ENCODE measurements at regions of chr2 and their contacts with region 1.

Region 1: GRCh38 chr2:234288974-234289455 is 207.9 kb downstream of the ARL4C start:
- DNase-seq: peak; percentile 76 to 83 (median 82)
- H3K4me3 ChIP-seq: peak overlapping the region in 1 of 2 donors; percentile 23
- H3K4me3 Mint-ChIP-seq: peak overlapping the region in 4 of 8 donors; percentile 46 to 85 (median 70)
- H3K27ac ChIP-seq: peak overlapping the region; percentile 97
- H3K27ac Mint-ChIP-seq: peak overlapping the region; percentile 93 to 100 (median 100)
- H3K4me1 ChIP-seq: peaks cover 56% of the 10 kb centered on the region
- H3K4me1 Mint-ChIP-seq: peaks cover 50 to 65% (median 58%) of the 10 kb centered on the region in 4 donors
- H3K27me3 ChIP-seq: no peaks in the 10 kb centered on the region
- H3K27me3 Mint-ChIP-seq: no peaks in the 10 kb centered on the region

Region 2: DNA sequence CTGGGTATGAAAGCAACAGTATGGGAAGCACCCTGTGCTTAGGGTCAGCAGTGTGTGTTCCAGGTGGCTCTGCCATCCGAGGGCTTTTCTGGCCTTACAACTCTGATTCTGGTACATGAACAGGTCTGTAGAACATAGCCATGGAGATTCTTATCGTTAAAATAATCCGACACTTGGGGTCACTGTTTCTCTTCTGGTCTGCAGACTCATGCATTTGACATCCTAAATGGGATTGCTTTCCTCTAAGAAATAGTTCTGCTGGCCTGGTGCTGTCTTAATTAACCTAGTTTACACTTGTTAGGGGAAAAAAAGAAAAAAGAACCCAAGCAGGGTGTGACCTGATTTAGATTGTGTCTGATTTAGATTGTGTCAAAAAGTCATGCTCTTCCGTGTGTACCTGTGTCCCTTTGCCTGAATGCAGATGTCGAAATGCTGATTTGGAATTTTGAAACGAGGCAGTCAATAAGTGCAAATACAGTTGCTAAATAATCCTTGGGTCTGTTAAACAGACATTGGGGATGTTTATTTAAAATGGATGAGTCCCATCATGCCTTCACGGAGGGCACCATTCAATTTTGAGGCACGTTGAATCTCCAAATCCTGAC is 312.2 kb before region 1 on chr2:
- CTCF ChIA-PET with region 1: interaction called, 4 read pairs
- POLR2A ChIA-PET with region 1: interaction called, 3 read pairs
- intact Hi-C with region 1: loop called (anchors 1 kb)
- DNase-seq: peak; percentile 40 to 69 (median 66)
- H3K4me3 ChIP-seq: no peak overlapping the region
- H3K4me3 Mint-ChIP-seq: peak overlapping the region in 6 of 8 donors; percentile 1 to 66 (median 27)
- H3K27ac ChIP-seq: no peak overlapping the region
- H3K27ac Mint-ChIP-seq: peak overlapping the region in 6 of 7 donors; percentile 9 to 83 (median 48)
- H3K4me1 ChIP-seq: peaks cover 24% of the 10 kb centered on the region
- H3K4me1 Mint-ChIP-seq: peaks cover 25 to 38% (median 27%) of the 10 kb centered on the region in 4 donors
- H3K27me3 ChIP-seq: no peaks in the 10 kb centered on the region
- H3K27me3 Mint-ChIP-seq: no peaks in the 10 kb centered on the region

Region 3: GRCh38 chr2:234146087-234146826 is 142.8 kb before region 1 on chr2:
- CTCF ChIA-PET with region 1: interaction called, 9 read pairs
- POLR2A ChIA-PET with region 1: interaction called, 14 read pairs
- intact Hi-C with region 1: no loop called
- DNase-seq: no peak
- H3K4me3 ChIP-seq: no peak overlapping the region
- H3K4me3 Mint-ChIP-seq: peak overlapping the region in 7 of 8 donors; percentile 4 to 77 (median 5)
- H3K27ac ChIP-seq: no peak overlapping the region
- H3K27ac Mint-ChIP-seq: peak overlapping the region in 6 of 7 donors; percentile 53 to 88 (median 84)
- H3K4me1 ChIP-seq: peaks cover 45% of the 10 kb centered on the region
- H3K4me1 Mint-ChIP-seq: peaks cover 40 to 80% (median 53%) of the 10 kb centered on the region in 4 donors
- H3K27me3 ChIP-seq: no peaks in the 10 kb centered on the region
- H3K27me3 Mint-ChIP-seq: no peaks in the 10 kb centered on the region

Region 4: GRCh38 chr2:234308813-234309195 is 19.8 kb after region 1 on chr2:
- CTCF ChIA-PET with region 1: interaction called, 22 read pairs
- POLR2A ChIA-PET with region 1: interaction called, 88 read pairs
- intact Hi-C with region 1: loop called (anchors 1 kb)
- DNase-seq: peak; percentile 77 to 92 (median 83)
- H3K4me3 ChIP-seq: no peak overlapping the region
- H3K4me3 Mint-ChIP-seq: peak overlapping the region in 7 of 8 donors; percentile 56 to 91 (median 76)
- H3K27ac ChIP-seq: peak overlapping the region; percentile 56
- H3K27ac Mint-ChIP-seq: peak overlapping the region; percentile 86 to 99 (median 98)
- H3K4me1 ChIP-seq: peaks cover 32% of the 10 kb centered on the region
- H3K4me1 Mint-ChIP-seq: peaks cover 36 to 53% (median 43%) of the 10 kb centered on the region in 4 donors
- H3K27me3 ChIP-seq: no peaks in the 10 kb centered on the region
- H3K27me3 Mint-ChIP-seq: no peaks in the 10 kb centered on the region

Region 5: GRCh38 chr2:234392041-234392615 is 103.1 kb after region 1 on chr2:
- CTCF ChIA-PET with region 1: interaction called, 7 read pairs
- POLR2A ChIA-PET with region 1: interaction called, 8 read pairs
- intact Hi-C with region 1: loop called (anchors 1 kb)
- DNase-seq: no peak
- H3K4me3 ChIP-seq: no peak overlapping the region
- H3K4me3 Mint-ChIP-seq: peak overlapping the region in 6 of 8 donors; percentile 8 to 65 (median 40)
- H3K27ac ChIP-seq: no peak overlapping the region
- H3K27ac Mint-ChIP-seq: peak overlapping the region; percentile 50 to 96 (median 85)
- H3K4me1 ChIP-seq: peaks cover 61% of the 10 kb centered on the region
- H3K4me1 Mint-ChIP-seq: peaks cover 47 to 65% (median 56%) of the 10 kb centered on the region in 4 donors
- H3K27me3 ChIP-seq: no peaks in the 10 kb centered on the region
- H3K27me3 Mint-ChIP-seq: no peaks in the 10 kb centered on the region

Region 6: GRCh38 chr2:234451852-234452625 is 163.0 kb after region 1 on chr2:
- CTCF ChIA-PET with region 1: interaction called, 64 read pairs
- POLR2A ChIA-PET with region 1: interaction called, 392 read pairs
- intact Hi-C with region 1: loop called (anchors 1 kb)
- DNase-seq: peak in 4 of 5 donors; percentile 38 to 65 (median 55)
- H3K4me3 ChIP-seq: peak overlapping the region; percentile 3 to 83
- H3K4me3 Mint-ChIP-seq: peak overlapping the region; percentile 64 to 97 (median 88)
- H3K27ac ChIP-seq: peak overlapping the region; percentile 90
- H3K27ac Mint-ChIP-seq: peak overlapping the region; percentile 72 to 99 (median 94)
- H3K4me1 ChIP-seq: peaks cover 91% of the 10 kb centered on the region
- H3K4me1 Mint-ChIP-seq: peaks cover 58 to 93% (median 74%) of the 10 kb centered on the region in 4 donors
- H3K27me3 ChIP-seq: no peaks in the 10 kb centered on the region
- H3K27me3 Mint-ChIP-seq: no peaks in the 10 kb centered on the region

Region 7: GRCh38 chr2:234494361-234495250 is 205.6 kb after region 1 on chr2:
- CTCF ChIA-PET with region 1: interaction called, 163 read pairs
- POLR2A ChIA-PET with region 1: interaction called, 471 read pairs
- intact Hi-C with region 1: loop called (anchors 1 kb)
- DNase-seq: peak; percentile 60 to 74 (median 65)
- H3K4me3 ChIP-seq: peak overlapping the region; percentile 78 to 97
- H3K4me3 Mint-ChIP-seq: peak overlapping the region; percentile 95 to 100 (median 98)
- H3K27ac ChIP-seq: peak overlapping the region; percentile 98
- H3K27ac Mint-ChIP-seq: peak overlapping the region; percentile 97 to 100 (median 99)
- H3K4me1 ChIP-seq: peaks cover 52% of the 10 kb centered on the region
- H3K4me1 Mint-ChIP-seq: peaks cover 39 to 76% (median 49%) of the 10 kb centered on the region in 4 donors
- H3K27me3 ChIP-seq: no peaks in the 10 kb centered on the region
- H3K27me3 Mint-ChIP-seq: no peaks in the 10 kb centered on the region

Measured in CD4-positive, alpha-beta memory T cell (primary cell).